A673 (cell line): ENCODE measurements at regions of chr2 and their contacts with region 1.

Region 1: GRCh38 chr2:205766779-205767359 is 84.6 kb downstream of the NRP2 start:
- DNase-seq: peak; percentile 73
- H3K4me3 ChIP-seq: no peak overlapping the region
- H3K27ac ChIP-seq: no peak overlapping the region
- H3K4me1 ChIP-seq: peaks cover 17% of the 10 kb centered on the region
- H3K27me3 ChIP-seq: no peaks in the 10 kb centered on the region
- CTCF ChIP-seq: peak; percentile 88

Region 2: GRCh38 chr2:205405752-205406151 is 361.1 kb before region 1 on chr2:
- CTCF ChIA-PET with region 1: no interaction called
- POLR2A ChIA-PET with region 1: no interaction called
- intact Hi-C with region 1: no loop called
- DNase-seq: no peak
- H3K4me3 ChIP-seq: no peak overlapping the region
- H3K27ac ChIP-seq: no peak overlapping the region
- H3K4me1 ChIP-seq: peaks cover 8% of the 10 kb centered on the region
- H3K27me3 ChIP-seq: no peaks in the 10 kb centered on the region
- CTCF ChIP-seq: no peak

Region 3: GRCh38 chr2:205685314-205686055 is 81.4 kb before region 1 on chr2:
- CTCF ChIA-PET with region 1: no interaction called
- POLR2A ChIA-PET with region 1: no interaction called
- intact Hi-C with region 1: loop called (anchors 2 kb)
- DNase-seq: peak; percentile 29
- H3K4me3 ChIP-seq: peak overlapping the region; percentile 40
- H3K27ac ChIP-seq: no peak overlapping the region
- H3K4me1 ChIP-seq: peaks cover 20% of the 10 kb centered on the region
- H3K27me3 ChIP-seq: peaks cover 59% of the 10 kb centered on the region
- CTCF ChIP-seq: no peak

Region 4: DNA sequence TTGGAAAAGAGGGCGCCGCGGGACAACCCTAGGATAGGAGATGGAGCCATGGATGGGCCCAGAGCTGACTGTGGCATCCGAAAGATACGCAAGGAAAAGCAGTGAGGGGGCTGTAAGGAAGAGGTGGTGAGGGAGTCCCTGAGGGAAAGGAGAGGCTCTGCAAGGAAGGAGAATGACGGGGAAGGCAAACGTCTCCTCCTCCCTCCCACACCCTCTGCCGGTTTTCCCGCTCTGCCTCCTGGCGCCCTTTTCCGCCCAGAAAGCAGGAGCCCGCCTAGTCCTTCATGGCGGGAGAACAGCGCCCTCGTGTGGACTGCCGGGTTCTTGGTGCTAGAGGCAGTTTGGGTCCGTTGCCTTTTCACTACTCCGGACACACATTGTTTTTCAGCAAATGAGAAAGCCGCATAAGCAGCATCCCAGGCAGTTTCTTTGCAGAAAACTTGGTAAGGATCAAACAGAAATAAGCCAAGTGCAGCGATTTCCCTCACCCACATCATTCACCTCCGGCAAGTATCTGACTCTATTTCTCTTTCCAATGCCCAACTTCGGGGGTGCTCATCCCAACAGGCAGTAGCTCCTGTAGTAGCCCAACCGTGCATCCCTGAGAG is 118.7 kb after region 1 on chr2:
- CTCF ChIA-PET with region 1: no interaction called
- POLR2A ChIA-PET with region 1: no interaction called
- intact Hi-C with region 1: loop called (anchors 1 kb)
- DNase-seq: peak; percentile 91
- H3K4me3 ChIP-seq: no peak overlapping the region
- H3K27ac ChIP-seq: no peak overlapping the region
- H3K4me1 ChIP-seq: no peaks in the 10 kb centered on the region
- H3K27me3 ChIP-seq: no peaks in the 10 kb centered on the region
- CTCF ChIP-seq: peak; percentile 94